ENCODE measurements at regions of chr2 and their contacts with region 1.

Region 1: GRCh38 chr2:100562732-100563720 is at the start of gene PDCL3:
- DNase-seq: peak; percentile 96
- ATAC-seq: peak; percentile 93
- H3K4me3 Mint-ChIP-seq: peak within 1 kb of the TSS; percentile 84
- H3K27ac Mint-ChIP-seq: peak within 1 kb of the TSS; percentile 99
- H3K4me1 Mint-ChIP-seq: peaks cover 32% of the 10 kb centered on the region
- H3K27me3 Mint-ChIP-seq: no peaks in the 10 kb centered on the region
- total RNA-seq, gene PDCL3: 33.9 to 34.1 TPM

Region 2: DNA sequence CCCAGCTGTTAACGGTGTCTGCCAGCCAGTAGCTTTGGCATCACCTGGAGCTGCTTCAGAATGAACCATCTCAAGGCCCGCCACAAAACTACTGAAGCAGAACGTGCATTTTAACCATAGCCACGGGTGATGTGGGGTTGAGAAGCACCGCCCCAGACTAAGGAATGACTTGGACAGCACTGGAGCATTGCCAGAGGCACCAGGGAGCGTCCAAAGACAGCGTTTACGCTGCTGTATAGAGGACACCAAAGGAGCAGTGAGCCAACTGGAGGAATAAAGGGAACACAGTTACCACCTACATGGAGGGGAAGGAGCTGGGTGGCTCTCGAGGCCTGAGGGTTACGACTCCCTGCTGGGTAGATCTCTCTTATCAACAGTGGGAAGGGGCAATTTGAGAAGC is 212.3 kb before region 1 on chr2:
- CTCF ChIA-PET with region 1: no interaction called
- POLR2A ChIA-PET with region 1: no interaction called
- DNase-seq: no peak
- ATAC-seq: no peak
- H3K4me3 Mint-ChIP-seq: no peak overlapping the region
- H3K27ac Mint-ChIP-seq: no peak overlapping the region
- H3K4me1 Mint-ChIP-seq: no peaks in the 10 kb centered on the region
- H3K27me3 Mint-ChIP-seq: peaks cover 18% of the 10 kb centered on the region

Region 3: DNA sequence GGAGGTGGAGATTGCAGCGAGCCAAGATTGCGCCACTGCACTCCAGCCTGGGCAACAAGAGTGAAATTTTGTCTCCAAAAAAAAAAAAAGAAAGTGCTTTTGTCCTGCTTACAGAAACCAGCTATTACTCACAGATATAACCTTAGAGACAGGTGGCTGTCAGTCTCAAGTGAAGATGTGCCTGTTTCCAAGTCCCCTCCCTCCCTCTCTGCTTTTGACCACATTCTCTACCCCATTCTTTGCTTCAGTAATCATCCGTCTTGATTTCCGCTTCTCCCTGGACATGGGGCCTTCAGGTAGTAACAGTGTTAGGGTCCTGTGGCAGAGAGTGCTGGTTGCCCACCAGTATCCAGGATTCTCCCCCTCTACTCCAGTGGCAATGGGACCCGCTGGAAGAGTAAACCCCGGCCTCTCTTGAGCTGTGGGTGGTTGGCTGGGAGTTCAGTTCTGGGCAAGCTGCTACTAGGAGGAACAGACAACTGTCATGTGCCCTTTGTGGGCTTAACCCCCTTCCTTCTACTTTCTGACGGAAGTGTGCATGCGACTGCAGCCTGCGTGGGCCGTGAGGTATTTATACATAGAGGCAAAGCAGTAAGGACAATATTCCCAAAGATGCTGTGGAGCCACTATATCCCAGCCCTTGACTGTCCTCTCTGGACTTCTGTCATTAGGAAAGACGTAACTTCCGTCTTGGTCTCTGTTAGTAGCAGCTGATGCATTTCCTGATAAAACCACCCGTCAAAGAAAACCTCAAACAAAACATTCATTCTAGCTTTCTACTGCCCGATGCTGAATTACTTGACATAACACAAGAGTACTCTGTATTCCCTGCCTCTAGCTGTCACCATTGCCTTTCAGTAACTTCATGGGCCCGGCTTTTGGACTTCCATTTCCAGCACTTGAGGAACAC is 17.6 kb after region 1 on chr2:
- CTCF ChIA-PET with region 1: interaction called, 16 read pairs
- POLR2A ChIA-PET with region 1: interaction called, 46 read pairs
- DNase-seq: peak; percentile 74
- ATAC-seq: peak; percentile 91
- H3K4me3 Mint-ChIP-seq: peak overlapping the region; percentile 47
- H3K27ac Mint-ChIP-seq: peak overlapping the region; percentile 98
- H3K4me1 Mint-ChIP-seq: peaks cover 51% of the 10 kb centered on the region
- H3K27me3 Mint-ChIP-seq: no peaks in the 10 kb centered on the region

Region 4: DNA sequence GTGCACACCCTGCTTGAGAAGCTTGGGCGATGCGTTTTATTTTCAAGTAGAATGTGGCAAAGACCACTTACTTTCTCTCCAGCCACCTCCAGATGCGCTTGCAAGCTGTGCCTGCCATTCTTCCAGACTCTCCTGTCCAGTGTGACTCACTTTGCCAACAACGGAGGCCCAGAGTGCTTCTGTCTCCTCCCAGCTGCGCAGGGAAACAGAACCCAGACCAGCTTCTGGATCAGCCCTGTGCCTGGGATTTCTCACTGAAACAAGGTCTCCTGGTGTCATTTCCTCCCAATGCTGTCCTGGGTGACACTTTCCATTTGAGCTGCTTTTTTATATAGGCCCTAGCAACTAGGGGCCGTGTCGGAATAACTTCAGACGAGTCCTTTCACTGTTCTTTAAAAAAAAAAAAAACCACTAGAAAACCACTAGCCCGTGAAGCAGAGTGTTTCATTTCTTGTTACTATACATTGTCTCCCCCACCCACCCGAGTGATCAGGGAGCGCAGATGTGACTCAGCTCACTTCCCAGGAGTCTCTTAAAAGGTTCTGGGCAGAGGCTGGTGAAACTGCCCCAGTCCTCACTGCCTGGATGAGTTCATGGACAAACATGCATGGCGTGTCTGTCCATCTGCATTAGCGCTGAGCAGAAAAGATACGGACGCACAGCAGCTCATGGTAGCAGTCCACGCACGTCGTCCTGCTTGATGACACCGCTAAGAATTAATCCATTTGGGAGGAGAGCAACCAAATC is 413.8 kb after region 1 on chr2:
- CTCF ChIA-PET with region 1: no interaction called
- POLR2A ChIA-PET with region 1: no interaction called
- DNase-seq: no peak
- ATAC-seq: no peak
- H3K4me3 Mint-ChIP-seq: no peak overlapping the region
- H3K27ac Mint-ChIP-seq: no peak overlapping the region
- H3K4me1 Mint-ChIP-seq: peaks cover 7% of the 10 kb centered on the region
- H3K27me3 Mint-ChIP-seq: no peaks in the 10 kb centered on the region

Measured in activated CD8-positive, alpha-beta T cell treated with anti-CD3 and anti-CD28 coated beads, Interleukin-2, amount 10 ng/mL, durations not matched to agents 7 days and 5 days (primary cell).